ENCODE measurements at regions of chr1 and their contacts with region 1.

Region 1: DNA sequence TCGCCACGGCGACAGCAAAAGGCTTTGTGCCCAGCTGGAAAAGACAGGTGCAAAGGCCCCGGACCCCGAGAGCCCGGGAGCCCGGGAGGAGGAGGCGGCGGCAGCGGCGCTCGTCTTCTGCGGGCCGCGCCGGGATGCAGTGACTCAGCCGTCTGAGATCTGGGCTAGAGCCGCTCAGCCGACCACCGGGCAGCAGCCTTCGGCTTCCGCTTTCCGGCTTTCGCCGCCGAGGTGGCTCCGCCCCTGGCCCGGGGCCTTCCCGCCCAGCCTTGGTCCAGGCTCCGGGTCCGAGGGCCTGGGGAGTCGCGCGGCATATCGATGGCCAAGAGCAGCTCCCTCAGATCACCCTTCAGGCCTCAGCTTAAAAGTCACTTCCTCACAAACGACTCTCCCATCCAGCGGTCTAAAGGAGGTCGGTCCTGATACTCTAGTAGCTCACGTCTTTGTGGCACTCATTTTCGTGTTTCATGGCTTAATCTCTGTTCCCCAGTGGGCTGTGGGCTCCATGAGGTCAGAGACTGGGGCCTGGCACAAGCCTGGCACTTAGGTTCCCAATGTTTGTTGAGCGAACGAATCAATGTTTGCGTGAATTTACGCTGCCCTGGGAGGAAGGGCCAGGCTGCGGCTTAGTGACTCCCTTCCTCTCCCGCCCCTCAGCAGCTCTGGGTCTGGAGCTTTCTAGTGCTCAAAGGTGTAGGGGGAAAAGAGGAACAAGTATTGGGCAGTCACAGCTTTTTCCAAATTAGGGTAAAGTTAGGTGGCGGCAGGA is at the start of gene PHTF1:
- DNase-seq: peak; percentile 88 to 94
- ATAC-seq: peak; percentile 96
- H3K4me3 ChIP-seq: peak within 1 kb of the TSS; percentile 91 to 98
- H3K27ac ChIP-seq: peak within 1 kb of the TSS; percentile 84 to 93
- H3K4me1 ChIP-seq: no peaks in the 10 kb centered on the region
- H3K27me3 ChIP-seq: no peaks in the 10 kb centered on the region
- total RNA-seq, gene PHTF1: 15.0 to 26.3 TPM

Region 2: GRCh38 chr1:113811888-113812660 is 52.6 kb after region 1 on chr1 and contains the start of gene RSBN1:
- intact Hi-C with region 1: loop called in 1 of 2 experiments (anchors 5 kb)
- DNase-seq: peak; percentile 99
- ATAC-seq: peak; percentile 99
- H3K4me3 ChIP-seq: peak within 1 kb of the TSS; percentile 61 to 84
- H3K27ac ChIP-seq: peak within 1 kb of the TSS; percentile 34 to 61
- H3K4me1 ChIP-seq: peaks cover 0 to 1% of the 10 kb centered on the region in 2 donors
- H3K27me3 ChIP-seq: no peaks in the 10 kb centered on the region
- total RNA-seq, gene RSBN1: 17.1 to 22.5 TPM